Naive thymus-derived CD8-positive, alpha-beta T cell (primary cell): ENCODE measurements at regions of chr20 and their contacts with region 1.

Region 1: GRCh38 chr20:64038565-64039292 is 2.7 kb downstream of the C20orf204 start:
- DNase-seq: peak; percentile 65 to 82 (median 76)
- ATAC-seq: peak; percentile 54 to 79
- H3K4me3 Mint-ChIP-seq: peak overlapping the region; percentile 45 to 90 (median 79)
- H3K27ac Mint-ChIP-seq: peak overlapping the region in 2 of 10 donors; percentile 83 to 87
- H3K4me1 Mint-ChIP-seq: peaks cover 33 to 65% (median 53%) of the 10 kb centered on the region in 4 donors
- H3K27me3 Mint-ChIP-seq: peaks cover 0 to 1% (median 0%) of the 10 kb centered on the region in 5 donors

Region 2: DNA sequence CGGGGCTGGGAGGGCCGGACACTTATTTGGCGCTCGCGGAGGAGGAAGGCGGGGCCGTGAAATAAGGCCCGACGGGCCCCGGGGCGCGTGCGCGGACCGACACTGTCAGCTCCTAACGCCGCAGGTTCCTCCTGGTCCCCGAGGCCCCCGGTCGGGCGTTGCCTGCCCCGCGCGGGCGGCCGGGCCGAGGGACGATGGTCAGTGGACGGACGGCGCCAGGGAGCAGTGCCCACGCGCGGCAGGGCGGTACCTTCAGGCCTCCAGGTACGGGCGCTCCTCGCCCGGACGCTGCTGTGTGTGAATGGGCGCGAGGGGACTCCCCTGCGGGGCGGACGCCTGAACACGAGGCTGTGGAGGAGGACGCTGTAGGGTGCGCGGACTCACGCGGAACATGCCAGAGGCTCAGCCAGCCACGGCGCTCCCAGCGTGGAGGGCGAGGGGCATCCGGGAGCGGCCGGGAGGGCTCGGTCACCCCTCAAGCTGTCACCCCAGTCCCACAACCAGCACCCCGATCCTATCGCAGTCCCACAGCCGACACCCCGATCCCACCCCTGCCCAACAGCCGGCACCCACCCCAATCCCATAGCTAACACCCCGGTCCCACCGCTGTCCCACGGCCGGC is 411.5 kb before region 1 on chr20:
- POLR2A ChIA-PET with region 1: interaction called, 10 read pairs
- DNase-seq: peak; percentile 90 to 99 (median 95)
- ATAC-seq: peak; percentile 82 to 83
- H3K4me3 Mint-ChIP-seq: peak overlapping the region; percentile 91 to 99 (median 98)
- H3K27ac Mint-ChIP-seq: peak overlapping the region; percentile 43 to 99 (median 96)
- H3K4me1 Mint-ChIP-seq: peaks cover 16 to 59% (median 45%) of the 10 kb centered on the region in 4 donors
- H3K27me3 Mint-ChIP-seq: no peaks in the 10 kb centered on the region

Region 3: GRCh38 chr20:63980806-63981728 is 57.7 kb before region 1 on chr20 and contains the start of gene PRPF6:
- POLR2A ChIA-PET with region 1: interaction called, 67 read pairs
- DNase-seq: peak; percentile 89 to 97 (median 94)
- ATAC-seq: peak; percentile 56 to 65
- H3K4me3 Mint-ChIP-seq: peak within 1 kb of the TSS; percentile 84 to 98 (median 96)
- H3K27ac Mint-ChIP-seq: peak within 1 kb of the TSS; percentile 94 to 98 (median 96)
- H3K4me1 Mint-ChIP-seq: peaks cover 44 to 69% (median 65%) of the 10 kb centered on the region in 4 donors
- H3K27me3 Mint-ChIP-seq: no peaks in the 10 kb centered on the region
- polyA plus RNA-seq, gene PRPF6: 67.2 to 110 (median 85.9) TPM

Region 4: GRCh38 chr20:64053841-64054661 is 15.3 kb after region 1 on chr20:
- POLR2A ChIA-PET with region 1: interaction called, 53 read pairs
- DNase-seq: no peak
- ATAC-seq: no peak
- H3K4me3 Mint-ChIP-seq: peak overlapping the region in 2 of 10 donors; percentile 8 to 10
- H3K27ac Mint-ChIP-seq: peak overlapping the region in 1 of 10 donors; percentile 34
- H3K4me1 Mint-ChIP-seq: peaks cover 8 to 23% (median 18%) of the 10 kb centered on the region in 4 donors
- H3K27me3 Mint-ChIP-seq: peaks cover 0 to 42% (median 8%) of the 10 kb centered on the region in 5 donors

Region 5: GRCh38 chr20:64062596-64063388 is 24.1 kb after region 1 on chr20 and contains the start of gene TCEA2:
- POLR2A ChIA-PET with region 1: interaction called, 49 read pairs
- DNase-seq: peak; percentile 82 to 94 (median 90)
- ATAC-seq: peak; percentile 94 to 97
- H3K4me3 Mint-ChIP-seq: peak within 1 kb of the TSS; percentile 81 to 92 (median 86)
- H3K27ac Mint-ChIP-seq: peak within 1 kb of the TSS; percentile 40 to 92 (median 76)
- H3K4me1 Mint-ChIP-seq: peaks cover 25 to 56% (median 51%) of the 10 kb centered on the region in 4 donors
- H3K27me3 Mint-ChIP-seq: no peaks in the 10 kb centered on the region
- polyA plus RNA-seq, gene TCEA2: 22.5 to 33.0 (median 32.1) TPM

Region 6: GRCh38 chr20:64079273-64080012 is 40.7 kb after region 1 on chr20 and contains the start of gene RGS19:
- POLR2A ChIA-PET with region 1: interaction called, 11 read pairs
- DNase-seq: peak in 9 of 10 donors; percentile 40 to 82 (median 65)
- ATAC-seq: peak; percentile 16 to 33
- H3K4me3 Mint-ChIP-seq: peak within 1 kb of the TSS; percentile 82 to 95 (median 92)
- H3K27ac Mint-ChIP-seq: peak within 1 kb of the TSS; percentile 53 to 96 (median 90)
- H3K4me1 Mint-ChIP-seq: peaks cover 22 to 66% (median 52%) of the 10 kb centered on the region in 4 donors
- H3K27me3 Mint-ChIP-seq: peaks cover 0 to 3% (median 1%) of the 10 kb centered on the region in 5 donors
- polyA plus RNA-seq, gene RGS19: 50.9 to 67.5 (median 59.4) TPM

Region 7: DNA sequence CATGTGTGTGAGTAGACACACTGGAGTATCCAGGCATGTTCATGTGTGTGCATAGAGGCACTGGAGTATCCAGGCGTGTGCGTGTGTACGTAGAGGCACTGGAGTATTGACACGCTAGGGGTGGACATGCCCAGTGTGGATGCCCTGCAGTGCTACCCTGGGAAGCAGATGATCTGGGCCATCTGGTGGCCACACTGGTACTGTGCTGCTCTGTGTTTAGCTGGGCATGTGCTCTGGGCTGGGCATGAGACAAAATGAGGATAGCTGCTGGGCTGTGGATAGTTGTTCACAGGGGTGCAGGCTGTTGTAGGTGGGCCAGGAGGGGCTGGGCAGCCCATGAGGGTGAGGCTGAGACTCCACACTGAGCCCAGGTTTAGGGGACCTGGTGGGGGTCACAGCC is 92.7 kb after region 1 on chr20:
- POLR2A ChIA-PET with region 1: no interaction called
- DNase-seq: peak in 1 of 10 donors; percentile 21
- ATAC-seq: no peak
- H3K4me3 Mint-ChIP-seq: no peak overlapping the region
- H3K27ac Mint-ChIP-seq: no peak overlapping the region
- H3K4me1 Mint-ChIP-seq: peaks cover 0 to 4% (median 0%) of the 10 kb centered on the region in 4 donors
- H3K27me3 Mint-ChIP-seq: peaks cover 12 to 44% (median 15%) of the 10 kb centered on the region in 5 donors

Region 8: GRCh38 chr20:64223526-64224067 is 184.9 kb after region 1 on chr20:
- POLR2A ChIA-PET with region 1: no interaction called
- DNase-seq: no peak
- ATAC-seq: no peak
- H3K4me3 Mint-ChIP-seq: no peak overlapping the region
- H3K27ac Mint-ChIP-seq: peak overlapping the region in 1 of 10 donors; percentile 40
- H3K4me1 Mint-ChIP-seq: peaks cover 8 to 38% (median 16%) of the 10 kb centered on the region in 4 donors
- H3K27me3 Mint-ChIP-seq: peaks cover 0 to 6% (median 0%) of the 10 kb centered on the region in 5 donors